ENCODE measurements at regions of chr15 and their contacts with region 1.

Region 1: DNA sequence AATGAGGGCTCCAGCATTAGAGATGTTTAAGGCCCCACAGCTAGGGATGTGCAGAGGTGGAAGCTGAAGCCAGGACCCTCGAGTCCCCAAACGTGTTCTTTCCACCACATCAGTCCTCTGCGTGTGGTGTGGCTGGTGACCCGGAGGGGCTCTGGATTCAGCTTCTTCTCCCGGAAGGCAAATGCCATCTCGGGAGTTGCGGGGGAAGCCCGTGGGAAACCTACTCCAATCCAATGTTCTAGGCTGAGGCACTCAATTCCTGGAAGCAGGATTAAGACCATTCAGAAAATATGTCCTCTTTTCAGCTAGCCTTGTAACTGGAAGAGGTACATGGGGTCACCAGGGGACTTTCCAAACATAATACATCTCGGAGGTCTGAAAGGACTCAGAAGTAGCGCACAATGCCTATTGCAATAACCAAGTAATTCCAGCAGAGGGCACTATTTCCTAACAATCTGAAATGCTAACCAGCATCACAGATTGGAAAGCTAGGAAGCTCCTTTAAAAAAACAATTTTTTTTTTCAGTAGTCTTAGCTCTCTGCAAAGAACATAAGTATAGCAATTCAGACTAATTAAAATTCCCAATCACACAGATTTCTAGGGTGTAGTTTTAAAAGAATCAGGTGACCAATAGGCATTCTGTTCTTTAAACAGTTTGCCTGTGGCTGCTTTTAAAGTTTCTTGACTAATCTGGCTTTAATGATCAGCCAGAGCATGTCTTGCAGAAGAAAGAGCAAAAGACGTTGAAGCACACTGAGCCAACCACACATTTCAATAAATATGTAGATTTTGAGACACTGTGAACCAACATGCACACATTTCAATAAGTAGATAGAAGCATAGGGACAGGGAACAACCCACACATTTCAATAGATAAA is 36.1 kb downstream of the BNC1 start:
- DNase-seq: peak; percentile 8
- H3K4me3 ChIP-seq: no peak overlapping the region
- H3K27me3 ChIP-seq: peaks cover 4% of the 10 kb centered on the region; the same call in 1 of the 2 replicates
- CTCF ChIP-seq: peak; percentile 79

Region 2: GRCh38 chr15:83178869-83179325 is 69.5 kb before region 1 on chr15:
- CTCF ChIA-PET with region 1: no interaction called
- POLR2A ChIA-PET with region 1: no interaction called
- DNase-seq: no peak
- H3K4me3 ChIP-seq: no peak overlapping the region
- H3K27me3 ChIP-seq: no peaks in the 10 kb centered on the region
- CTCF ChIP-seq: no peak

Region 3: DNA sequence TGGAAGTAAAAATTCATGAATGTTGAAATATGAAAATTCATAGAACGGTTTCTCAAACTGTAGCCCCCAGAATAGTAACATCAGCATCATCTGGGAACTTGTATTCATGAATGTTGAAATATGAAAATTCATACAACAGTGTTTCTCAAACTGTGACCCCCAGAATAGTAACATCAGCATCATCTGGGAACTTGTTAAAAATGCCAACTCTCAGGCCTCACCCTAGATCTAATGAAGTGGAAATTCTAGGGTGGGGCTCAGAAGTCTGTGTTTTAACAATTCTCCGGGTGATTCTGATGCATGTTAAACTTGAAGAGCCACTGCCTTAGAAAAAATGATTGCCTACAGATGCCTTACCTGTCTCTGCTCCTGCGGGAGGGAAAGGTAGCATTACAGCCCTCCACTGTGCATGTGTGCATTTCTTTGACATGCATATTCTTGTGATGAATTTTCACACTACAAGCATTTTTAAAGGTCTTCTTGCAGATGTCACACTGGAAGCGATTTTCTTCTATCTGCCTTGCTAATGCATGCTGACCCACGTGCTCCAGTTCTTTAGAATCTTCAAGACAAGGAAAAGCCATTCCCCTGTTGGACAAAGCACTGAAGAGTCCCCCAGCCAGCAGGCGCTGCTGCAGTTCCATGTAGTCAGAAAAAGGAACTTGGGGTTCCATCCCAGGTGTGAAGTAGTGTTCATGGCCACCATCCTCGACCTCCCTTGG is 14.4 kb after region 1 on chr15:
- CTCF ChIA-PET with region 1: interaction called, 15 read pairs
- POLR2A ChIA-PET with region 1: no interaction called
- DNase-seq: no peak
- H3K4me3 ChIP-seq: no peak overlapping the region
- H3K27me3 ChIP-seq: no peaks in the 10 kb centered on the region
- CTCF ChIP-seq: no peak

Region 4: DNA sequence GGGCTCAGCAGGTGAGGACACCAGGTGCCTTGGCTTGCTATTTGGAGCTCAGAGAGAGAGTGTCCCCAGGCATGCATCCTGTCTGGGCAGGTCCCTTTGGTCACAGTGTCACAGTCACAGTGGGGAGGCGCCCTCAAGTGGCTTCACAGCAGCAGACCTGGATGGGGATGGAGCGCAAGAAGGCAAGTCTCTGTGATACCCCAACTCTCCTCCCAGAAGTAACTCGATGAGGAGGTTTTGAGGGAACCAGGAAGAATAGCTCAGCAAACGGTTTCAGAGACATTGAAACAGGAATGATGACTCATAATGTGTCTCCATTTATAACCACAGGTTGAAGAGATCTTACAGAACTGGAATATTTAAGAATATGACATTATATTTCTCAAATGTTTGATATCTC is 132.3 kb after region 1 on chr15:
- CTCF ChIA-PET with region 1: interaction called, 67 read pairs
- POLR2A ChIA-PET with region 1: no interaction called
- DNase-seq: no peak
- H3K4me3 ChIP-seq: no peak overlapping the region
- H3K27me3 ChIP-seq: no peaks in the 10 kb centered on the region
- CTCF ChIP-seq: peak; percentile 33; the same call in 1 of the 2 replicates

Region 5: DNA sequence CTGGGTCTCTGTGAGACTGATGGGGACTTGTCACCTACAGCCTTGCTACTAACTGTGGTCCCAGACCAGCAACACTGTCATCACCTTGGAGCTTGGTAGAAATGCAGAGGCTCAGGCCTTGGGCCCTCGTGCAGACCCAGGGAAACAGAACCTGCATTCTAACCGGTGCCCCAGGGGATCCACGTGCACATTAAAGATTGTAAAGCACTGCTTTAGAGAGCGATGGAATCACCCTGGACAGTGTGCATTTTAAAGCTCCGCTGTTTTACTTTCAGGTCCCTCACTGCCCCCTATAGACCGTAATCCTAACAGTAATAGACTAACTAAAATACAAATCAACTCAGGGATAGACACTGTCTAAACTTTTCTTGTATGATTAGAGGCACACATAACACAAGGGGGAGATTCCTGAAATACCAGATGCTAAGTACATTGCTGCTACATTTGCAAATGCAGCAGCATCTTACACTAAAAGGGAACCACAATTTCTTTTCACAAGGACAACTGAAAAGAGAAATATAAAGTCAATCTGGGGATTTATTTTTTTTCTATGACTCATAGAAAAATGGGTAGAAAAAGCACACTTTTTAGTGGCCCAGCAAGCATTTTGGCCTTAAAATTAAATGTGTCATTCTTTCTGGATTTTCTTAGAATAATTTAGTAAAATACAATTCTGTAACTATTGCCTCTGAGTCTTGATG is 188.2 kb after region 1 on chr15:
- CTCF ChIA-PET with region 1: interaction called, 145 read pairs
- POLR2A ChIA-PET with region 1: no interaction called
- DNase-seq: no peak
- H3K4me3 ChIP-seq: no peak overlapping the region
- H3K27me3 ChIP-seq: no peaks in the 10 kb centered on the region; the same call in 1 of the 2 replicates
- CTCF ChIP-seq: peak; percentile 62

Region 6: GRCh38 chr15:83559310-83559966 is 311.0 kb after region 1 on chr15:
- CTCF ChIA-PET with region 1: interaction called, 88 read pairs
- POLR2A ChIA-PET with region 1: no interaction called
- DNase-seq: no peak
- H3K4me3 ChIP-seq: no peak overlapping the region
- H3K27me3 ChIP-seq: no peaks in the 10 kb centered on the region; the same call in 1 of the 2 replicates
- CTCF ChIP-seq: peak; percentile 87

Region 7: GRCh38 chr15:83571820-83572707 is 323.7 kb after region 1 on chr15:
- CTCF ChIA-PET with region 1: interaction called, 20 read pairs
- POLR2A ChIA-PET with region 1: no interaction called
- DNase-seq: no peak
- H3K4me3 ChIP-seq: no peak overlapping the region
- H3K27me3 ChIP-seq: no peaks in the 10 kb centered on the region
- CTCF ChIP-seq: peak; percentile 65